ENCODE measurements at regions of chr2 and their contacts with region 1.

Region 1: DNA sequence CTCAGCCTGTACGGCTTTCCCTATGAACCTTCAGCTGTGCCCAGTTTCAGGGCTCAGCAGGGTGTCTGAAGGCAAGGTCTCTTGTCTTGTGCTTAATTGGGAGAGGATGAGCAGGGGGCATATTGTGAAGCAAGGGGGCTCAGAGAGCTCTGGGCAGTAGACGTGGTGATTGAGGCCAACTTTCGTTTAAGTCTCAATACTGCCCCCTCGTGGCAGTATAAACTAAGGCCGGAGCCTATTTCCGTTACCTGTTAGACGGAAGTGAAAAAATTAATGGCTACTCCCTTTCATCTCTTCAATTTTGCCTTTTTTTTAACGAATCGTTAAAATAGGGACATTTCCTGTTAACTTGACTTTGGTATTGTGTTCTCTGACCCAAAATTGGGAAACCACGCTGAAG is 193.4 kb downstream of the TDRD15 start:
- DNase-seq: peak; percentile 13
- ATAC-seq: peak; percentile 63
- H3K4me3 ChIP-seq: no peak overlapping the region
- H3K27ac ChIP-seq: no peak overlapping the region
- H3K4me1 ChIP-seq: no peaks in the 10 kb centered on the region
- H3K27me3 ChIP-seq: no peaks in the 10 kb centered on the region
- CTCF ChIP-seq: peak in 2 of 3 experiments; percentile 59 to 63; a peak in 3 of 6 replicates
- POLR2A ChIP-seq: no peak
- RAD21 ChIP-seq: peak; percentile 29; the same call in 1 of the 2 replicates

Region 2: DNA sequence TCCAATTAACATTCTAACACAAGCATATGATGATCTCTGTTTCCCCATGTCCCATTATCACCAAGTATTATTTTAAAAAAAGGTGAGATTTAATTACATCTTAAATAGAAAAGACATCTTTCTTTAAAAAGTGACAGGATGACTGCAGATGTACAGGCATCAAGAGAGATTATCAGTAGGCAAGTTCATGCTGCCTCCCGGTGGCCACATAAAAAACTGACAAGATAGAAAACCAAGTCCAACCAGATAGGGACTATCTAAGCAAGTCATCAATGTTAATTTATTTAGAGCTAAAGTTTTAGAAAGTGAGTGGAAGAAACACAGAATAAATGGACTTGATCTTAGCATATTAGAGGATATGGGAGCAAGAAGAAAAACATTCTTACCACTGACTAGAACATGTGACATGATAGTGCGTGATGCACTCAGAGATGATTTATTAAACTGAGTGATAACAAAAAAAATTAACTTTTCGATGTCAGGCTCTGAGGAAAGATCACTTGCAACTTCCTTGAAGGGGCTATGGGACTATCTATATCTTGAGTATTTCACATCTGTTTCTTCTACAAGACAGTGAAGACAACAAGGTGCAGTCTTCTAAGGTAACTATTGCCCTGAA is 198.7 kb before region 1 on chr2:
- CTCF ChIA-PET with region 1: no interaction called
- POLR2A ChIA-PET with region 1: no interaction called
- RAD21 ChIA-PET with region 1: no interaction called
- intact Hi-C with region 1: no loop called
- DNase-seq: peak; percentile 26
- ATAC-seq: peak; percentile 75
- H3K4me3 ChIP-seq: no peak overlapping the region
- H3K27ac ChIP-seq: no peak overlapping the region
- H3K4me1 ChIP-seq: no peaks in the 10 kb centered on the region
- H3K27me3 ChIP-seq: peaks cover 11% of the 10 kb centered on the region
- CTCF ChIP-seq: peak; percentile 30 to 70 (median 50); a peak in 5 of 6 replicates
- POLR2A ChIP-seq: no peak
- RAD21 ChIP-seq: peak; percentile 64

Region 3: DNA sequence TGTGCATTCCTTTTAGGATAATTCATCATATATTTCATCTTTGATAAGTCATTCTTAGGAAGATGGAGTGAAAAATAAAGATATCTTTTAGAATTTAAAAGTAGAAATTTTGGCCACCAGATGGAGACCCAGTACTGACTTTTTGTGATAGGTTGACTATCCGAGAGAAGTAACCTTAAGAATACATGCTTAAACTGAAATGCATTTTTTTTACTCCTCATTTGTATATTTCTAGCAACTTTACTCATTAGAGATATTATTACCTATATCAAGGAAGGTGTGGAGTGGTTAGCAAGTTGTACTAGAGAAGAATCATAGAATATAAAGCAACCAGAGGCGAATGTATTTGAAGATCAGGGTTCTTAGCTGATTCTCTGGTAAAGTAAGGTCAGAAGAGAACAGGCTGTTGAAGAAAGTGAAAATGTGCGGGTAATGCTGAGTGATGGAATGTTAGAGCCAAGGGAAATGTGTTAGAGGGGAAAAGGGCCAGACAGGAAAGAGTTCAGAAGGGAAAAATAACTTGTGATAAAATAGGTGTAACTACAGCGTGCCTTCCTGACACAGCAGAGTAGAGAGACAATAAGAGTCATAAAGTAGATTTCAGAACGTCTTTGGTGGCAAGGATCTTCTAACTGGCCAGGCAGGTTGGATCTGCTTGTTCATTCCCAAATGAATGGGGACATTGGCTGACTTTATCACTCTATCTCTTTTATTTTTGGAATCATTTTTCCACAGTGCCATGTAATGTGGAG is 141.1 kb before region 1 on chr2:
- CTCF ChIA-PET with region 1: no interaction called
- POLR2A ChIA-PET with region 1: no interaction called
- RAD21 ChIA-PET with region 1: no interaction called
- intact Hi-C with region 1: loop called (anchors 10 kb)
- DNase-seq: no peak
- ATAC-seq: no peak
- H3K4me3 ChIP-seq: no peak overlapping the region
- H3K27ac ChIP-seq: no peak overlapping the region
- H3K4me1 ChIP-seq: no peaks in the 10 kb centered on the region
- H3K27me3 ChIP-seq: 0 out of 2 replicates have a peak, but pooled peaks cover 6% of the 10 kb centered on the region
- CTCF ChIP-seq: no peak
- POLR2A ChIP-seq: no peak
- RAD21 ChIP-seq: peak; percentile 23; the same call in 1 of the 2 replicates